ENCODE measurements at regions of chr6 and their contacts with region 1.

Region 1: DNA sequence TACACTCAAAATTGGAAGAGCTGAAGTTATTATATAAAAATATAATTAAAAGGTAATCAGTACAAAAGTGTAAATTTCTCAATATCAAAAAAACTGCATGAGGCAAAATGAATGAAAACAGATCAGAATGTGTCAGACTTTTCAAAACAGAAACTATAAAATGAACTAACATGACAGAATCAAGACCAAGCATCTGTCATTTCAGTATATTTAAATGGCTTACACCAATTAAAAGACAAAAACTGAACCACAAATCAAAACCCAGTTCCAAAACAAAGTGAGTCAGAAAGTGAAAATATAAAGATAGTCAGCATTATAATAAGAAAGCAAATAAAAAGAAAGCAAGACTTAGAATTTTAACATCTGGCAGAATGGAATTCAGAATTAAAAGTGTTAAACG is 289.7 kb downstream of the UBE3D start:
- DNase-seq: no peak
- ATAC-seq: no peak
- H3K4me3 ChIP-seq: no peak overlapping the region
- H3K27ac ChIP-seq: no peak overlapping the region
- H3K4me1 ChIP-seq: no peaks in the 10 kb centered on the region
- H3K27me3 ChIP-seq: no peaks in the 10 kb centered on the region
- CTCF ChIP-seq: no peak

Region 2: GRCh38 chr6:82750556-82750955 is 25.4 kb before region 1 on chr6:
- CTCF ChIA-PET with region 1: no interaction called
- POLR2A ChIA-PET with region 1: no interaction called
- in situ Hi-C with region 1: no loop called
- intact Hi-C with region 1: loop called (anchors 2 kb)
- DNase-seq: no peak
- ATAC-seq: no peak
- H3K4me3 ChIP-seq: no peak overlapping the region
- H3K27ac ChIP-seq: no peak overlapping the region
- H3K4me1 ChIP-seq: no peaks in the 10 kb centered on the region
- H3K27me3 ChIP-seq: no peaks in the 10 kb centered on the region
- CTCF ChIP-seq: no peak